ENCODE measurements at regions of chr4 and their contacts with region 1.

Region 1: DNA sequence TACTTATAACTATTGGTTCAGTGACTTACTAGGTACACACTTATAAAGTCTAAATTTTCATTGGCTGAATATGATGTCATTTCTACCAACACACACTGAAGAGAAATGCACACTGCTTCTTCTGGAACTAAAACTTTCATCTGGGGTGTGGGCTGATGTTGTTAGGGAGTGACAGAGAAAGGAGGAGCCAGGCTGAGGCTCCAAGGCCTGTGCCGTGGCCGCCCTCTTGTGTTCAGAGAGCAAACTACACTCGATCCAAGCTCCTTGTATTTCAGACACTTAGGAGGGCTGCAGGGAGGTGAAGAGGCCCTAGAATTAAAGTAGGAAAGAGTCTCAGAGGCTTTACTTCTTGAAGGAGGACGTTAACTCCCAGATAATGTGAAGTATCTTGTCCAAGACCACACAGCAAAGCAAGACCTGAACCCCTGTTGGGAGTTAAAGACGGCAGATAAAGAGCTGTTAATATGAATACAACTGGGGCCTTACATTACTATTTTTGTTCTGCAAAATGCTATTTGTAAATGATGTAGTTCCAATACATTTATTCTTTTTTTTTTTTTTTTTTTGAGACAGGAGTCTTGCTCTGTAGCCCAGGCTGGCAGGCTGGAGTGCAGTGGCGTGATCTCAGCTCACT is 137.5 kb downstream of the AFAP1 start:
- DNase-seq: peak in 1 of 2 donors; percentile 91
- H3K4me3 ChIP-seq: no peak overlapping the region
- H3K27ac ChIP-seq: no peak overlapping the region
- H3K4me1 ChIP-seq: peaks cover 21 to 30% of the 10 kb centered on the region in 2 donors
- H3K27me3 ChIP-seq: no peaks in the 10 kb centered on the region
- CTCF ChIP-seq: peak; percentile 90 to 95 (median 93)

Region 2: DNA sequence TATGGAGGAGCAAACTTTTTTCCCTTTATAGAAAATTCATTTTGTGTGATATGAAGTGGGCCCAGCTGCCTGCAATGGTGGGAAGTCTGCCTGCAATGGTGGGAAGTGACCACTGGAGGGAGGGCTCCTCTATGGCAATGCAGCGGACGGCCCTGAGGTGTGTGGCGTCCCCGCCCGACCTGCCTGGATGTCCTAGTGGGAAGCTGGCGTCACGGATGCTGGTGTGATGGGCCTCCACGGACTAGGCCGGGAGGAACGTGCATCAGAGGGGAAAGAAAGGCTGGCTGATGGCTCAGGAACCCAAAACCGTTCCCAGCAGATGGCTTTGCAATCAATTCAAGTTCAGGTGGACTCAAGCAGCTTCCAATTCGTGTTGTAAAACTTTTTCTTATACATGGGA is 40.5 kb before region 1 on chr4:
- intact Hi-C with region 1: loop called (anchors 1 kb)
- DNase-seq: peak; percentile 31 to 90
- H3K4me3 ChIP-seq: no peak overlapping the region
- H3K27ac ChIP-seq: peak overlapping the region; percentile 0 to 55
- H3K4me1 ChIP-seq: no peaks in the 10 kb centered on the region
- H3K27me3 ChIP-seq: no peaks in the 10 kb centered on the region
- CTCF ChIP-seq: peak; percentile 76 to 82 (median 81)

Region 3: DNA sequence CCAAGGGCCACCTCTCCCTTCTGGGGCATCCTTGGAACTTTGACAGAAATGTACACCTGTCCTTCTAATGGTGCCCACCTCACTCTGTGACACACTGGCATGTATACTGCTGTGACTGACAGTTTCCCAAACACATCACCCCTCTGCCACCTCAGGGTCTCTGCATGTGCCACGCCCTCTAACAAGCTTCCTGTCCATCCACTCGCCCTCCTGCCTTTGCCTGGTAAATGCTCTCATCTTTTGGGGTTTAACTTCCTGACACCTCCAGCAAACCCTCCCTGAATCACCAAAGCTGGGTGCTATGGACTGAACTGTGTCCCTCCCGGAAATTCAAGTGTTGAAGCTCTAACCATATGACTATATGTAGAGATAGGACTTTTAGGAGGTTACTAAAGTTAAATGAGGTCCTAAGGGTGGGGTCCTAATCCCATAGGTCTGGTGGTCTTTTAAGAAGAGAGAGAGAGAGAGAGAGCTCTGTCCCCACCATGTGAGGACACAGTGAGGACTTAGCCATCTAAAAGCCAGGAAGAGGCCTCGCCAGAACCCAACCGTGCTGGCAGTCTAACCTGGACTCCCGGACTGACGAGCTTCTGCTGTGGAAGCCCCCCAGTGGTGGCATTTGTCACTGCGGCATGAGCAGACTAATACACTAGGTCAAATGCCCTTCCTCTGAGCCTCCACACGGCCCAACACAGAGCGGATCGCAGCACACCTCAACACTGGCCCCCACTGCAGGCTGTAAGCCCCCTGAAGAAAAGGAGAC is 41.8 kb after region 1 on chr4:
- intact Hi-C with region 1: loop called (anchors 1 kb)
- DNase-seq: peak in 1 of 2 donors; percentile 89
- H3K4me3 ChIP-seq: no peak overlapping the region
- H3K27ac ChIP-seq: peak overlapping the region; percentile 10 to 83
- H3K4me1 ChIP-seq: peaks cover 0 to 30% of the 10 kb centered on the region in 2 donors
- H3K27me3 ChIP-seq: no peaks in the 10 kb centered on the region
- CTCF ChIP-seq: peak; percentile 46 to 54 (median 53)

Region 4: GRCh38 chr4:7939377-7940108 is 137.3 kb after region 1 on chr4 and contains the start of gene AFAP1:
- intact Hi-C with region 1: loop called (anchors 1 kb)
- DNase-seq: peak; percentile 33 to 93
- H3K4me3 ChIP-seq: peak within 1 kb of the TSS; percentile 77 to 99
- H3K27ac ChIP-seq: peak within 1 kb of the TSS; percentile 82 to 93
- H3K4me1 ChIP-seq: peaks cover 0 to 11% of the 10 kb centered on the region in 2 donors
- H3K27me3 ChIP-seq: no peaks in the 10 kb centered on the region
- CTCF ChIP-seq: no peak
- total RNA-seq, gene AFAP1: 84.9 TPM

Region 5: GRCh38 chr4:8070736-8071718 is 268.8 kb after region 1 on chr4:
- intact Hi-C with region 1: no loop called
- DNase-seq: no peak
- H3K4me3 ChIP-seq: no peak overlapping the region
- H3K27ac ChIP-seq: no peak overlapping the region
- H3K4me1 ChIP-seq: no peaks in the 10 kb centered on the region
- H3K27me3 ChIP-seq: no peaks in the 10 kb centered on the region
- CTCF ChIP-seq: no peak

Region 6: DNA sequence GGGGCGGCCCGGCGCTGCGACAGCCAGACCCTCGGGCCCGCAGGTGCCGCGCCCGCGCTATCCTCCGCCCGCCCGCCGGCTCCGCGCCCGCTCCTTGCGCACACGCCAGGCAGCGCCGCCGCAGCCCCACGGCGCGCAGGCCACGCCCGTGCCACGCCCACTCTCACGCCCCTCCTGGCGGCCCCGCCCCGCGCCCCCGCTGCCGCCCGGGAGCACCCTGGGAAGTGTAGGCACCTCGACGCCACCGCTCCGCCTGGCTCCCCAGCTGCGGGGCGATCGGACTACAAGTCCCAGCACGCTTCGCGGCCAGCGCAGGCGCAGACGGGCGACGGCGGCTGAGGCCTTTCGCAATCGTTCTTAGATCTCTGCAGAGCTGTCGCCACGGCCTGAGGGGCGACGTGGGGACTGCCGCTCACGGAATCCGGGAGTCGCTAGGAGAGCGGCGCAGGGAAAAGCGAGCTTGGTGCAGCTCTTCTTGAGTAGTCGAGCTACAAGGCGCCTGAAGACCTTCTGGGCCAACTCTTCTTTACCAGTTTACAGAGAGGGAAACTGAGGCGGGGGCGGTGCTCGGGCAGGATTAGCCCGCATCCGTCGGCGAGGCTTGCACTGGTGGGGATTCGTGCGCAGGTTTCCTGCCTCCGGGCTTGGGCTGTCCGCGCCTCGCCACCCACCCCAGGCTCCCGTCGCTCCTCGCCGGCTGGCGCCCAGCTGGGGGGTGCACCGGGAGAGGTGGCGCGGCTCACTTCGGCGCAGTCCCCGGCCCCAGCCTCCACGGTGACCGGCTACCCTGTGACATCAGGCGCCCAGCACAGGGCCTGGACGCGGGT is 356.7 kb after region 1 on chr4 and contains the start of gene ABLIM2:
- intact Hi-C with region 1: loop called (anchors 10 kb)
- DNase-seq: peak; percentile 92 to 99
- H3K4me3 ChIP-seq: peak within 1 kb of the TSS; percentile 86 to 94
- H3K27ac ChIP-seq: peak within 1 kb of the TSS; percentile 36 to 50
- H3K4me1 ChIP-seq: peaks cover 13 to 25% of the 10 kb centered on the region in 2 donors
- H3K27me3 ChIP-seq: no peaks in the 10 kb centered on the region
- CTCF ChIP-seq: no peak
- total RNA-seq, gene ABLIM2: 30.8 TPM